ENCODE measurements at regions of chr14 and their contacts with region 1.

Region 1: GRCh38 chr14:100067971-100068959 is 3.0 kb downstream of the EVL start:
- DNase-seq: peak; percentile 89
- ATAC-seq: peak; percentile 44
- H3K4me3 ChIP-seq: peak overlapping the region; percentile 75
- H3K27ac ChIP-seq: peak overlapping the region; percentile 84
- H3K4me1 ChIP-seq: peaks cover 73% of the 10 kb centered on the region
- H3K27me3 ChIP-seq: no peaks in the 10 kb centered on the region
- CTCF ChIP-seq: no peak
- EP300 ChIP-seq: 0 out of 4 replicates have a peak, but pooled peaks have one; percentile 55 to 67
- POLR2A ChIP-seq: peak; percentile 74
- RAD21 ChIP-seq: no peak

Region 2: DNA sequence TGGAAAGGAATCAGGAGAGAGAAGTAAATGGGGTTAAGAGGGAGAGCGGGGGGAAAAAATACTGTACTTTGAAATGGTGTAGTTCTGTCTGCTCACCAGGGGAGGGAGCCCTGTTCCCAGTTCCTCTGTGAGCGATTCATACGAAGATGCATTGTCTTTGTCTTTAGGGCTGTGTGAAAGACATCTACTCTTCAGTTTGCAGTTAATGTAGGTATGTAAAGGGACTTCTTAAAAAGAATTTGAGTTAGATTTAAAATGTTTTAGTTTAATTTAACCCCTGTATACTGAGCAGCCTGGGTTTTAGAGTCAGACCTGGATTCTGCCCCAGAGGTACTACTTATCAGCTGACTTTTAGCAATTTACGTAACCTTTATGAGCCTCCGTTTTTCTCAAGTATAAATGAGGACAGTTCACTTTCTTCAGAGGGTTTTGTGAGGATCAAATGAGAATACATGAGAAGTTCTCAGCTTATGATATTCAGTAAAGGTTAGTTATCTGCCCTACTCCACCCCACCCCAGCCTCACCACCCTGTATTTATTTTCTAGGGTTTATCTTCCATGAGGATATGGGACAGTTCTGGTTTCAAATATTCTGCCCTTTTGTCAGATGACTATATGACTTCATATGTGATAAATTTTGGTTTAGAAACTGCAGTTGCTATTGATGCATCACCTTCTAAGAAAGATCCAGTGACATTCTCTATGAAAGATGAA is 85.6 kb before region 1 on chr14:
- CTCF ChIA-PET with region 1: interaction called, 51 read pairs
- POLR2A ChIA-PET with region 1: no interaction called
- RAD21 ChIA-PET with region 1: interaction called, 20 read pairs
- SMC1A ChIA-PET with region 1: interaction called, 31 read pairs
- in situ Hi-C with region 1: no loop called
- intact Hi-C with region 1: loop called (anchors 5 kb)
- DNase-seq: peak; percentile 33
- ATAC-seq: peak; percentile 95
- H3K4me3 ChIP-seq: no peak overlapping the region
- H3K27ac ChIP-seq: no peak overlapping the region
- H3K4me1 ChIP-seq: no peaks in the 10 kb centered on the region
- H3K27me3 ChIP-seq: no peaks in the 10 kb centered on the region
- CTCF ChIP-seq: peak; percentile 84 to 93 (median 86)
- EP300 ChIP-seq: no peak
- POLR2A ChIP-seq: no peak
- RAD21 ChIP-seq: peak; percentile 93

Region 3: GRCh38 chr14:100015251-100015655 is 53.0 kb before region 1 on chr14:
- CTCF ChIA-PET with region 1: interaction called, 6 read pairs
- POLR2A ChIA-PET with region 1: interaction called, 4 read pairs
- RAD21 ChIA-PET with region 1: interaction called, 27 read pairs
- SMC1A ChIA-PET with region 1: interaction called, 14 read pairs
- in situ Hi-C with region 1: no loop called
- intact Hi-C with region 1: loop called (anchors 2 kb)
- DNase-seq: peak; percentile 54
- ATAC-seq: peak; percentile 97
- H3K4me3 ChIP-seq: no peak overlapping the region
- H3K27ac ChIP-seq: no peak overlapping the region
- H3K4me1 ChIP-seq: no peaks in the 10 kb centered on the region
- H3K27me3 ChIP-seq: no peaks in the 10 kb centered on the region
- CTCF ChIP-seq: peak in 1 of 3 experiments; percentile 7; a peak in 1 of 6 replicates
- EP300 ChIP-seq: peak; percentile 49 to 84; a peak in 2 of 4 replicates
- POLR2A ChIP-seq: no peak
- RAD21 ChIP-seq: no peak

Region 4: DNA sequence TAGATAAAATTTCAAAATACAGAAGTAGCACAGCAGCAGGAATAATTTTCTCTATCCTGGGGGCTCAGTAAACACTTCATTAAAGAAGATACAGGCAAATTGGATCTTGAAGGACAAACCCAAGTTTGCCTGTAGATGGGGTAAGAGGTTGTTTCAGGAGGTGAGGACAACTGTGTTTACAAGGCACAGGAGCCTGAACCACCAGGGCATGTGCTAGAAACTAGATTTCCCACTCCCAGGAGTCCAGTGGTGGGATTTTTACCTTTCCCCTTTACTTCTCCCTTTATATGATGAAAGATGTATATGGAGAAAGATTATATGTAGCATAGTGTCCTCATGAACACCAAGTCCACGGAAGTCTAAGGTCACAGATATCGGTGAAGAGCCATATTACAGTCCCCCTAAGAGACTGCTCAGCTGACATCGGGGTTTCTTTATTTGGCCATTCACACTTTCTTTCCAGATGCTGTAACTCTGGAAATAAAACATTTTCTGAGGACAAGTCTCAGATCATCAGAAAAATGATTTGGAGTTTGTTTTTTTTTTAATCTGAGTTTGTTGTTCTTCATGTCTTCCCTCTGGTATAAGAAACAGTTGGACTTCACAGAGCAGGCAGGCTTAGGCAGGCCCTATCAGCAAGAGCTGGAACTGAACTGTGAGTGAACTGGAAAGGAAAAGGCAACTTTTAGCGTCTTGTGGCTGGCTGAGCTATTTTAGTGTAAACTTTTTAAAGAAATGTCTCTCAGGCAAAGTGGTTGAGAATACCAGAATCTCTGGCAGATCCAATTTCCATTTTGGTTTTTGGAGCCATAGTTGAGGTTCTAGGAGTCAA is 11.1 kb before region 1 on chr14:
- CTCF ChIA-PET with region 1: interaction called, 156 read pairs
- POLR2A ChIA-PET with region 1: interaction called, 51 read pairs
- RAD21 ChIA-PET with region 1: interaction called, 65 read pairs
- SMC1A ChIA-PET with region 1: interaction called, 96 read pairs
- in situ Hi-C with region 1: no loop called
- intact Hi-C with region 1: no loop called
- DNase-seq: no peak
- ATAC-seq: peak; percentile 80
- H3K4me3 ChIP-seq: no peak overlapping the region
- H3K27ac ChIP-seq: peak overlapping the region; percentile 53
- H3K4me1 ChIP-seq: peaks cover 37% of the 10 kb centered on the region
- H3K27me3 ChIP-seq: no peaks in the 10 kb centered on the region
- CTCF ChIP-seq: peak; percentile 53 to 76 (median 61)
- EP300 ChIP-seq: no peak
- POLR2A ChIP-seq: no peak
- RAD21 ChIP-seq: peak; percentile 85

Region 5: GRCh38 chr14:100096570-100096971 is 28.3 kb after region 1 on chr14:
- CTCF ChIA-PET with region 1: interaction called, 15 read pairs
- POLR2A ChIA-PET with region 1: no interaction called
- RAD21 ChIA-PET with region 1: no interaction called
- SMC1A ChIA-PET with region 1: interaction called, 5 read pairs
- in situ Hi-C with region 1: no loop called
- intact Hi-C with region 1: no loop called
- DNase-seq: no peak
- ATAC-seq: no peak
- H3K4me3 ChIP-seq: no peak overlapping the region
- H3K27ac ChIP-seq: no peak overlapping the region
- H3K4me1 ChIP-seq: no peaks in the 10 kb centered on the region
- H3K27me3 ChIP-seq: no peaks in the 10 kb centered on the region
- CTCF ChIP-seq: no peak
- EP300 ChIP-seq: no peak
- POLR2A ChIP-seq: no peak
- RAD21 ChIP-seq: no peak

Region 6: GRCh38 chr14:100165376-100165775 is 97.1 kb after region 1 on chr14:
- CTCF ChIA-PET with region 1: no interaction called
- POLR2A ChIA-PET with region 1: no interaction called
- RAD21 ChIA-PET with region 1: no interaction called
- SMC1A ChIA-PET with region 1: no interaction called
- in situ Hi-C with region 1: no loop called
- intact Hi-C with region 1: no loop called
- DNase-seq: no peak
- ATAC-seq: peak; percentile 50
- H3K4me3 ChIP-seq: no peak overlapping the region
- H3K27ac ChIP-seq: no peak overlapping the region
- H3K4me1 ChIP-seq: no peaks in the 10 kb centered on the region
- H3K27me3 ChIP-seq: peaks cover 2 to 3% of the 10 kb centered on the region in 2 experiments; a peak in 2 of 4 replicates
- CTCF ChIP-seq: no peak
- EP300 ChIP-seq: no peak
- POLR2A ChIP-seq: no peak
- RAD21 ChIP-seq: no peak

Region 7: GRCh38 chr14:100192672-100193416 is 124.6 kb after region 1 on chr14:
- CTCF ChIA-PET with region 1: interaction called, 65 read pairs
- POLR2A ChIA-PET with region 1: interaction called, 4 read pairs
- RAD21 ChIA-PET with region 1: interaction called, 13 read pairs
- SMC1A ChIA-PET with region 1: interaction called, 21 read pairs
- in situ Hi-C with region 1: no loop called
- intact Hi-C with region 1: loop called (anchors 2 kb)
- DNase-seq: peak; percentile 96
- ATAC-seq: peak; percentile 99
- H3K4me3 ChIP-seq: peak overlapping the region; percentile 68
- H3K27ac ChIP-seq: peak overlapping the region; percentile 86
- H3K4me1 ChIP-seq: peaks cover 11% of the 10 kb centered on the region
- H3K27me3 ChIP-seq: no peaks in the 10 kb centered on the region
- CTCF ChIP-seq: peak; percentile 73 to 91 (median 80)
- EP300 ChIP-seq: no peak
- POLR2A ChIP-seq: peak; percentile 85
- RAD21 ChIP-seq: peak; percentile 73

Region 8: GRCh38 chr14:100375963-100376735 is 307.9 kb after region 1 on chr14:
- CTCF ChIA-PET with region 1: interaction called, 3 read pairs
- POLR2A ChIA-PET with region 1: interaction called, 4 read pairs
- RAD21 ChIA-PET with region 1: interaction called, 4 read pairs
- SMC1A ChIA-PET with region 1: no interaction called
- in situ Hi-C with region 1: no loop called
- intact Hi-C with region 1: loop called (anchors 5 kb)
- DNase-seq: peak; percentile 74
- ATAC-seq: peak; percentile 85
- H3K4me3 ChIP-seq: peak within 1 kb of the TSS; percentile 86
- H3K27ac ChIP-seq: peak within 1 kb of the TSS; percentile 98
- H3K4me1 ChIP-seq: peaks cover 29% of the 10 kb centered on the region
- H3K27me3 ChIP-seq: no peaks in the 10 kb centered on the region
- CTCF ChIP-seq: no peak
- EP300 ChIP-seq: no peak
- POLR2A ChIP-seq: peak; percentile 91
- RAD21 ChIP-seq: no peak

Measured in GM12878 (cell line).